ENCODE measurements at regions of chr12 and their contacts with region 1.

Region 1: DNA sequence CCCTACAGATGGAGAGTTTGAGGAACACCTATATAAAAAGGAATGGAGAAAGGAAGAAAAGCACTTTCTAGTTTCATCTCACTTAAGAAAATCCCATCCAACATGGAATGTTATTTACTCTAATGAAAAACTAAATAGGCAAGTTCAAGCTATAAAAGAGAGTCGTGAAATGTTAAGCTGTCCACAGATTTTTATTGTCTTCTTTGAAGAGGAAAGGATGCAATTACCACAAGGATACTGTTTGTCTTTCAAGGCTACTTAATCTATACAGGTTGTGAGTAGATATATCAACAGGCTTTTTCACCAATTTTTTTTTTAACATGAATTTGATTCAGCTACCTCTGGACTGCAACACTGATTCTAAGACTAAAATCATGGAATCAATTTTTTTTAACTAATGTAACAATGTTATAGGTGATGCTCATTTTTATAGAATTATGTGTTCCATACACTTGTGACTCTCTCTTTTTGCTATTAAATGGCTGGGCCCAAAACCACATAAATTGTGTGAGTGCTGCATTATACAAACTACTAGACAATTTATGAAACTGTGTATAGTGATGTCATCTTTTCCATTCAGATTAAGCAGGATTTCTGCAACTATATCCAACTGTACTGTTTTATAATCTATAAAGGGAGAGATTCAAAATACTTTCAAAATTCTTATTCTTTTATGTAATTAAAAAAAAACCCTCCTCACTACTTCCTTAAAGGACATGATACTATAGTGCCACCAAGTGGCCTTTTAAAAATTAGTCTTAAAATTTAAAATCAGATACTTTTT is 26.8 kb upstream of the BMAL2 start:
- DNase-seq: peak; percentile 65
- ATAC-seq: peak; percentile 35; the same call in 1 of the 2 replicates
- H3K4me3 ChIP-seq: no peak overlapping the region
- H3K27ac ChIP-seq: no peak overlapping the region
- H3K4me1 ChIP-seq: peaks cover 4% of the 10 kb centered on the region
- H3K27me3 ChIP-seq: no peaks in the 10 kb centered on the region
- CTCF ChIP-seq: peak; percentile 64
- POLR2A ChIP-seq: no peak
- RAD21 ChIP-seq: peak; percentile 71

Region 2: DNA sequence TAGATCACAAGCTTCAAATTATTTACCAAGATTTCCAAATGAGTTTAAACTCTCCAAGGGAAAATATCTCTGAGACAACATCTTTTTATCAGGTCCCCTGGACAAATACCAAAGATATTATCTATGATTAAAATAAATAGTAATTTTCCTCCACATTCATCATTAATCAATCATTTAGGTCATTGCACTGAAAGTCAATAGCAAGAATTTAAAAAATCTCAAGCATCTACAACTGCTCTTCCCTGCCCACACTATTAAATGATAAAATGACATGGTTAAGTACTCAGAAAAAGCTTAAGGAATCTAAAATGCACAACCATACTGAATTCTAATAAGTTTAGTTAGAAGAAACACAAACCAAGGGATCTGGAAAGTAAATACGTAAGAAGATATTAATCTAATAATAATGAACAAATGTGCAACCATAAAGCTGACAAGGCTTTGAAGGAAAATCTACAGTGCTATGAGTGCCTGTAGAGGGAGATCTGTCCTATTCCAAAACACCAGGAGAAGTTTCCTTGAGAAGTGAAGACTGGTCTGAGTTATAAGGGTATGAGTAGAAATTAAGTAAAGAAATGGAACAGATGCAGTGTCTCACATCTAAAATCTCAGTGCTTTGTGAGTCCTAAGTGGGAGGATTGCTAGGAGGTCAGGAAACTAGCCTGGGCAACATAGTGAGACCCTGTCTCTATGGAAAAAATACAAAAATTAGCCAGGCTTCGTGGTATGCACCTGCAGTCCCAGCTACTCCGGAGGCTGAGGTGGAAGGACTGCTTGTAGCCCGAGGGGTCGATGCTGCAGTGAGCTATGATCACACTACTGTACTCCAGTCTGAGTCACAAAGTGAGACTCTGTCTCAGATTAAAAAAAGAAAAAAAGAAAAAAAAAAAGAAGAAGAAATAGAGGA is 387.3 kb before region 1 on chr12:
- CTCF ChIA-PET with region 1: no interaction called
- POLR2A ChIA-PET with region 1: no interaction called
- dilution Hi-C with region 1: no loop called
- in situ Hi-C with region 1: no loop called
- intact Hi-C with region 1: loop called (anchors 10 kb)
- DNase-seq: peak; percentile 7
- ATAC-seq: peak; percentile 46
- H3K4me3 ChIP-seq: no peak overlapping the region
- H3K27ac ChIP-seq: no peak overlapping the region
- H3K4me1 ChIP-seq: peaks cover 2% of the 10 kb centered on the region
- H3K27me3 ChIP-seq: no peaks in the 10 kb centered on the region
- CTCF ChIP-seq: peak; percentile 29; the same call in 1 of the 2 replicates
- POLR2A ChIP-seq: no peak
- RAD21 ChIP-seq: no peak

Region 3: GRCh38 chr12:27243804-27244683 is 61.8 kb before region 1 on chr12 and contains the start of gene STK38L:
- CTCF ChIA-PET with region 1: interaction called, 3 read pairs
- POLR2A ChIA-PET with region 1: no interaction called
- dilution Hi-C with region 1: no loop called
- in situ Hi-C with region 1: no loop called
- intact Hi-C with region 1: loop called (anchors 10 kb)
- DNase-seq: peak; percentile 93
- ATAC-seq: peak; percentile 99
- H3K4me3 ChIP-seq: peak within 1 kb of the TSS; percentile 75
- H3K27ac ChIP-seq: peak within 1 kb of the TSS; percentile 81
- H3K4me1 ChIP-seq: peaks cover 2% of the 10 kb centered on the region; the same call in 1 of the 2 replicates
- H3K27me3 ChIP-seq: no peaks in the 10 kb centered on the region
- CTCF ChIP-seq: peak; percentile 49
- POLR2A ChIP-seq: peak; percentile 95
- RAD21 ChIP-seq: peak; percentile 58
- total RNA-seq, gene STK38L: 7.2 and 15.3 TPM in 2 replicates